Mammary epithelial cell (primary cell): ENCODE measurements at regions of chr2 and their contacts with region 1.

Region 1: GRCh38 chr2:186641807-186642321 is 52.0 kb upstream of the FAM171B start:
- DNase-seq: peak; percentile 74
- H3K4me3 ChIP-seq: no peak overlapping the region
- H3K27ac ChIP-seq: no peak overlapping the region
- H3K4me1 ChIP-seq: no peaks in the 10 kb centered on the region
- H3K27me3 ChIP-seq: no peaks in the 10 kb centered on the region
- CTCF ChIP-seq: peak; percentile 75 to 87

Region 2: GRCh38 chr2:186653511-186653910 is 11.6 kb after region 1 on chr2:
- CTCF ChIA-PET with region 1: interaction called, 12 read pairs
- dilution Hi-C with region 1: no loop called
- in situ Hi-C with region 1: no loop called
- intact Hi-C with region 1: no loop called
- DNase-seq: no peak
- H3K4me3 ChIP-seq: no peak overlapping the region
- H3K27ac ChIP-seq: no peak overlapping the region
- H3K4me1 ChIP-seq: no peaks in the 10 kb centered on the region
- H3K27me3 ChIP-seq: no peaks in the 10 kb centered on the region
- CTCF ChIP-seq: no peak

Region 3: GRCh38 chr2:186757009-186757408 is 115.1 kb after region 1 on chr2:
- CTCF ChIA-PET with region 1: no interaction called
- dilution Hi-C with region 1: no loop called
- in situ Hi-C with region 1: no loop called
- intact Hi-C with region 1: no loop called
- DNase-seq: no peak
- H3K4me3 ChIP-seq: no peak overlapping the region
- H3K27ac ChIP-seq: no peak overlapping the region
- H3K4me1 ChIP-seq: no peaks in the 10 kb centered on the region
- H3K27me3 ChIP-seq: no peaks in the 10 kb centered on the region
- CTCF ChIP-seq: no peak